MCF 10A (cell line): ENCODE measurements at regions of chr20 and their contacts with region 1.

Region 1: DNA sequence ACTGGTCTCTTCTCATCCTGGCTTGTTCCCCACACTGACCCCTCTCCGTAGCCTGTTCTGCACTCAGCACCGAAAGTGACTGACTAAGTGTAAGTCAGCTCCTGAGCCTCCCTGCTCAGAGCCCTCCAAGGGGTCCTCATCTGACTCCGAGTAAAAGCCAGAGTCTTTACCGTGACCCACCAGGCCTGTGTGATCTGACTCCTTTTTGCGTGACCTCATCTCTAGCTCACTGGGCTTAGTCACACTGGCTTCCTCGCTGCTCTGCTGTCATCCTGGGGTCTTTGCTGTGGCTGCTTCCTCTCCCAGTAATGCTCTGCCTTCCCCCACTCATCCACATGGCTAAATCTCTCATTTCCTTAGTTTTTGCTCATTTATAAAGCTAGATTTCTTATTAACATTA is 116.6 kb downstream of the PLCB4 start:
- DNase-seq: no peak
- H3K4me3 Mint-ChIP-seq: no peak overlapping the region
- H3K27ac Mint-ChIP-seq: no peak overlapping the region
- H3K4me1 Mint-ChIP-seq: no peaks in the 10 kb centered on the region
- H3K27me3 Mint-ChIP-seq: no peaks in the 10 kb centered on the region
- CTCF ChIP-seq: no peak

Region 2: DNA sequence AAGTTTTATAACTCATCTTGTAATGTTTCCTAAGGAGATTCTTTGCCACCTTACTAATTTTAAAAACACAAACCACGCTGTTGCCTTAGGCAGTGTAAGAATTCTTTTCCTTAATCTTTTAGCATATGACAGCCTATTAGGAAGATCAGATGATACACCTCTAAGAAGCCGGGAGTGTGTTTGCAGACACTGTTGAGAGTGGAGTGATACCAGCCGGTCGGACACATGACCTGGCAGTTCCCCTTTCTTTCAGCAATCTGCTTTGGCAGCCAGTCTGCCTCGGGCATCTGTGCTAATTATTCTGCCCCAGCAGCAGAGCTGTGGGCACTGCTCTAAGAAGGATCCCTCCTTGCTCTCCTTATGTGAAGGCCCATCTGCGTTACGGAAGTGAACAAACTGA is 65.7 kb before region 1 on chr20:
- CTCF ChIA-PET with region 1: no interaction called
- POLR2A ChIA-PET with region 1: no interaction called
- intact Hi-C with region 1: loop called (anchors 10 kb)
- DNase-seq: peak; percentile 69
- H3K4me3 Mint-ChIP-seq: peak overlapping the region; percentile 12
- H3K27ac Mint-ChIP-seq: peak overlapping the region; percentile 13
- H3K4me1 Mint-ChIP-seq: peaks cover 16% of the 10 kb centered on the region
- H3K27me3 Mint-ChIP-seq: no peaks in the 10 kb centered on the region
- CTCF ChIP-seq: no peak